ENCODE measurements at regions of chr9 and their contacts with region 1.

Region 1: GRCh38 chr9:113275157-113276131 is at the starts of genes CDC26 and PRPF4:
- DNase-seq: peak; percentile 97
- H3K4me3 Mint-ChIP-seq: no peak within 1 kb of the TSS
- H3K27ac Mint-ChIP-seq: no peak within 1 kb of the TSS
- H3K4me1 Mint-ChIP-seq: peaks cover 37% of the 10 kb centered on the region
- H3K27me3 Mint-ChIP-seq: no peaks in the 10 kb centered on the region
- total RNA-seq, gene CDC26: 28.8 to 31.0 TPM
- total RNA-seq, gene PRPF4: 30.6 to 32.4 TPM

Region 2: DNA sequence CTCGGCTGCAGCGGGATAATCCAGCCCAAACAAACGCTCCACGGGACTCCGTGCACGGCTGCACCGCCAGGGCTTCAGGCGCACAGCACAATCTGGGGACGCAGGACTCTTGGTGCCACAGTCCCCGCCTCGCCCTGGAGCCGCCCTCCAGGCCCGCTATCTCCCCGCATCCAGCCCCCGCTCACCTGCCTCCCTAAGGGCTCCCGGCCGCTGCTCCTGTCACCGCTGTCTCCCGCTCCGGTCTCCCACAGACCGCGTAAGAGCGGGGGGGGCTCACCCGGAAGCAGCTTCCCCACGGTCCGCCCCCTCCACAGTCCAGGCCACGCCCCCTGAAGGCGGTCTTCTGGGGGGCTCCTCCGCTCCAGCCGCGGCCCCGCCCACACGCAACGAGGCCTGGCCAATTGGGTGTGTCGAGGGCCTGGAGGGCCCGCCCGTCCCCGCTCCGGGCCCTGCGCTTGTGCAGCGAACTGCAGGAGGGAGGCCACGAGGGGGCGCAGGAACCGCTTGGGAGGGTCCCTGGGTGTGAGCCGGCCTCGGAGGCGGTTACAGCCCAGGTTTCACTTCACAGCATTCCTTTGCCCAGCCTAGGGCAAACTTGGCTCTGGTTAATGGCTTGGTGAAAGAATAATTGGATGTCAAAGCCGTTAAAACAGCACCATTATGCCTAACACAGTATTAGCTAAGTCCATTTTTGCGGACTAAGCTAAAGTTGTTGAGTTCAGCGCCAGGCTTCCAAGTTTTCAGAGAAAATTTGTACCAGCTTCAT is 125.8 kb after region 1 on chr9 and contains the start of gene ALAD:
- CTCF ChIA-PET with region 1: interaction called, 11 read pairs
- POLR2A ChIA-PET with region 1: interaction called, 4 read pairs
- DNase-seq: peak; percentile 99
- H3K4me3 Mint-ChIP-seq: peak within 1 kb of the TSS; percentile 89
- H3K27ac Mint-ChIP-seq: peak within 1 kb of the TSS; percentile 93
- H3K4me1 Mint-ChIP-seq: peaks cover 26% of the 10 kb centered on the region
- H3K27me3 Mint-ChIP-seq: no peaks in the 10 kb centered on the region
- total RNA-seq, gene ALAD: 37.5 to 40.6 TPM